Natural killer cell (primary cell): ENCODE measurements at regions of chr2 and their contacts with region 1.

Region 1: GRCh38 chr2:170928824-170929685 is at the start of gene GORASP2:
- DNase-seq: peak; percentile 96 to 99
- ATAC-seq: peak; percentile 89 to 97 (median 89)
- H3K4me3 ChIP-seq: peak within 1 kb of the TSS; percentile 69
- H3K4me3 Mint-ChIP-seq: peak within 1 kb of the TSS; percentile 96
- H3K27ac ChIP-seq: peak within 1 kb of the TSS; percentile 81
- H3K27ac Mint-ChIP-seq: peak within 1 kb of the TSS; percentile 93 to 94
- H3K4me1 ChIP-seq: peaks cover 17% of the 10 kb centered on the region
- H3K4me1 Mint-ChIP-seq: peaks cover 45 to 54% of the 10 kb centered on the region in 2 donors
- H3K27me3 ChIP-seq: no peaks in the 10 kb centered on the region
- H3K27me3 Mint-ChIP-seq: no peaks in the 10 kb centered on the region
- CTCF ChIP-seq: peak; percentile 97
- total RNA-seq, gene GORASP2: 75.3 to 94.5 (median 80.3) TPM

Region 2: GRCh38 chr2:169584005-169584877 is 1344.8 kb before region 1 on chr2 and contains the start of gene PPIG:
- intact Hi-C with region 1: loop called (anchors 5 kb)
- DNase-seq: peak; percentile 85 to 97
- ATAC-seq: peak; percentile 86 to 93 (median 87)
- H3K4me3 ChIP-seq: peak within 1 kb of the TSS; percentile 98
- H3K4me3 Mint-ChIP-seq: peak within 1 kb of the TSS; percentile 96
- H3K27ac ChIP-seq: peak within 1 kb of the TSS; percentile 99
- H3K27ac Mint-ChIP-seq: peak within 1 kb of the TSS; percentile 97 to 99
- H3K4me1 ChIP-seq: peaks cover 10% of the 10 kb centered on the region
- H3K4me1 Mint-ChIP-seq: peaks cover 31 to 32% of the 10 kb centered on the region in 2 donors
- H3K27me3 ChIP-seq: no peaks in the 10 kb centered on the region
- H3K27me3 Mint-ChIP-seq: no peaks in the 10 kb centered on the region
- CTCF ChIP-seq: no peak
- total RNA-seq, gene PPIG: 42.2 to 58.3 (median 56.1) TPM

Region 3: GRCh38 chr2:171086352-171087290 is 157.6 kb after region 1 on chr2:
- intact Hi-C with region 1: loop called (anchors 2 kb)
- DNase-seq: peak in 1 of 2 donors; percentile 81
- ATAC-seq: peak; percentile 59 to 75 (median 67)
- H3K4me3 ChIP-seq: no peak overlapping the region
- H3K4me3 Mint-ChIP-seq: peak overlapping the region; percentile 74
- H3K27ac ChIP-seq: no peak overlapping the region
- H3K27ac Mint-ChIP-seq: peak overlapping the region; percentile 10 to 49
- H3K4me1 ChIP-seq: peaks cover 3% of the 10 kb centered on the region
- H3K4me1 Mint-ChIP-seq: peaks cover 41 to 49% of the 10 kb centered on the region in 2 donors
- H3K27me3 ChIP-seq: no peaks in the 10 kb centered on the region
- H3K27me3 Mint-ChIP-seq: no peaks in the 10 kb centered on the region
- CTCF ChIP-seq: peak; percentile 50

Region 4: DNA sequence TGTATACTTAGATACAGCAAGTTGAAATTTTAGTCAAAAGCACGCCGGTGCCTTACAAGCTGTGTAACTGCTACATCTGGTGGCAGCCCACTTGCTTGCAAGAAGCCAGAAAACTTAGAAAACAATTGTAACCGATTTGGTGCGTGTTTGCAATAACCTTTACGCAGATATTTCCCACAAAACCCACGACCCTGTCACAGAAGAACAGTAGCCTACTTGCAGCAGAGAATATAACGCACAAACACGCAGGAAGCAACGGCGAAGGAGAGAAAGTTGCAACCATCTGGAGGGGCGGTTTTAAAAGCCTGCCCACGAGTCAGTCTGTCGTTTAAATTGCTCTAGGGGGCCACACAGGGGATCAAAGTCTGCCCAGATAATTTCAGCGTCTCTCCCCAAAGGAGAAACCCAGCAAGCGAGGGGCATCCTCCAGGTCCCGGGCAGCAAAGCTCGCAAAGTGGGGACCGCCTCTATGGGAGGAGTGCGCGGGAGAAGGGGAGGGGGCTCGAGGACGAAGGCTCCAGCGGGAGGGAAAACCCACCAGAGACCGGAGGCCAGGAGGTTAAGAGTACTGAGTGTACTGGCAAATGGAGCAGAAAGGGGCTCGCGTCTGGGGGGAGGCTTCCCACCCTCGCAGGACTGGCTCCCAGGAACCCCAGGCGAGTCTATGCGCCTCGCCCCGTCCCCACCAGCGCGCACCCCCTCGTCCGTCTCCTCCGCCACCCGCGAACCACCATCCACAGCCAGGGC is 230.5 kb after region 1 on chr2:
- intact Hi-C with region 1: loop called (anchors 2 kb)
- DNase-seq: peak; percentile 47 to 86
- ATAC-seq: peak; percentile 28 to 46 (median 33)
- H3K4me3 ChIP-seq: peak overlapping the region; percentile 74
- H3K4me3 Mint-ChIP-seq: peak overlapping the region; percentile 98
- H3K27ac ChIP-seq: peak overlapping the region; percentile 90
- H3K27ac Mint-ChIP-seq: peak overlapping the region; percentile 87 to 96
- H3K4me1 ChIP-seq: peaks cover 3% of the 10 kb centered on the region
- H3K4me1 Mint-ChIP-seq: peaks cover 48 to 50% of the 10 kb centered on the region in 2 donors
- H3K27me3 ChIP-seq: no peaks in the 10 kb centered on the region
- H3K27me3 Mint-ChIP-seq: no peaks in the 10 kb centered on the region
- CTCF ChIP-seq: peak; percentile 50

Region 5: DNA sequence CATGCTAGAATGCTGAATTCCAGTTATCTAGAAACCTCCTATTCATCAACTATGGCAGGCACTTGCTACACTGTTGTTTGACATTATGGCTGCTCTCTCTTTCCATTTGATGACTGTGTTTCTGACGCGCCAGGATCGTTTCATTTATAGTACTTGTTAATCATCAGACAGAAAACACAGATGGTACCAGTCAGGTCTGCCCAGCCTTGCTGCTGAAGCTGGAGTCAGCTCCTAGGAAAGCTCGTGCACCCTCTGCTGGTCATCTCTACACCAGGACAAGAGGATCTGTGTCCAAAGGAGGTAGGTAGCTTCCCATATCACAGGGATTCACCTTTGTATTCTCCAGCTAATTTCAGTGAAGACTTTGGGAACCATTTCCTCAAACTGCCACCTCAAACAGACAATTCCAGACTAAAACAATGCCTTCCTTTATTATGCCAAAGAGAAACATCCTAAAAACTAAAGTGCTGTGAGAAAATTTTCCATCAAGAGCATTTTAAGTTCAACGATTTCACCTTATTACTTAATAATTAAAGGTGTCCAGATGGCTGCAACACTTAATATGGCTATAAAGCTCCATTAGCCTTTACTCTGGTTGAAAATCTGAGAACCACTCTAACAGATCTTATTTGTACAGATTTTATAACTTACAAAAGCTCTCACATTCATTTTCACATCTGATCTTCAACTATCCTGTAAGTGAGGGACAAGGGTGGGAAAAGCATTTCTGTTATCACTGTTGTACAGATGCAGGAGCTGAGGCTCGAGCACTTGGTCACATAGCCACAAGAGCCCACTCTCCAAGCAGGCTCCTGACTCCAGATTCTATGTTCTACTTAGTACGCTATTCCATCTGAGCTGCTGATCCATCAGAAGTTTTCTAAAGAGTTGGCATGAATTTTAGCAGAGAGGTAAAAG is 487.2 kb after region 1 on chr2:
- intact Hi-C with region 1: loop called (anchors 1 kb)
- DNase-seq: peak; percentile 45 to 88
- ATAC-seq: peak; percentile 88 to 99 (median 98)
- H3K4me3 ChIP-seq: no peak overlapping the region
- H3K4me3 Mint-ChIP-seq: no peak overlapping the region
- H3K27ac ChIP-seq: no peak overlapping the region
- H3K27ac Mint-ChIP-seq: peak overlapping the region in 1 of 2 donors; percentile 6
- H3K4me1 ChIP-seq: no peaks in the 10 kb centered on the region
- H3K4me1 Mint-ChIP-seq: peaks cover 6 to 14% of the 10 kb centered on the region in 2 donors
- H3K27me3 ChIP-seq: no peaks in the 10 kb centered on the region
- H3K27me3 Mint-ChIP-seq: no peaks in the 10 kb centered on the region
- CTCF ChIP-seq: peak; percentile 70

Region 6: GRCh38 chr2:171433763-171434670 is 505.0 kb after region 1 on chr2 and contains the starts of genes DCAF17 and METTL8:
- intact Hi-C with region 1: loop called (anchors 2 kb)
- DNase-seq: peak; percentile 89 to 96
- ATAC-seq: peak; percentile 93 to 98 (median 93)
- H3K4me3 ChIP-seq: peak within 1 kb of the TSS; percentile 87
- H3K4me3 Mint-ChIP-seq: peak within 1 kb of the TSS; percentile 94
- H3K27ac ChIP-seq: peak within 1 kb of the TSS; percentile 97
- H3K27ac Mint-ChIP-seq: peak within 1 kb of the TSS; percentile 88 to 91
- H3K4me1 ChIP-seq: peaks cover 10% of the 10 kb centered on the region
- H3K4me1 Mint-ChIP-seq: peaks cover 27 to 31% of the 10 kb centered on the region in 2 donors
- H3K27me3 ChIP-seq: no peaks in the 10 kb centered on the region
- H3K27me3 Mint-ChIP-seq: no peaks in the 10 kb centered on the region
- CTCF ChIP-seq: peak; percentile 44
- total RNA-seq, gene DCAF17: 20.0 to 33.8 (median 30.7) TPM
- total RNA-seq, gene METTL8: 14.3 to 16.7 (median 15.2) TPM

Region 7: DNA sequence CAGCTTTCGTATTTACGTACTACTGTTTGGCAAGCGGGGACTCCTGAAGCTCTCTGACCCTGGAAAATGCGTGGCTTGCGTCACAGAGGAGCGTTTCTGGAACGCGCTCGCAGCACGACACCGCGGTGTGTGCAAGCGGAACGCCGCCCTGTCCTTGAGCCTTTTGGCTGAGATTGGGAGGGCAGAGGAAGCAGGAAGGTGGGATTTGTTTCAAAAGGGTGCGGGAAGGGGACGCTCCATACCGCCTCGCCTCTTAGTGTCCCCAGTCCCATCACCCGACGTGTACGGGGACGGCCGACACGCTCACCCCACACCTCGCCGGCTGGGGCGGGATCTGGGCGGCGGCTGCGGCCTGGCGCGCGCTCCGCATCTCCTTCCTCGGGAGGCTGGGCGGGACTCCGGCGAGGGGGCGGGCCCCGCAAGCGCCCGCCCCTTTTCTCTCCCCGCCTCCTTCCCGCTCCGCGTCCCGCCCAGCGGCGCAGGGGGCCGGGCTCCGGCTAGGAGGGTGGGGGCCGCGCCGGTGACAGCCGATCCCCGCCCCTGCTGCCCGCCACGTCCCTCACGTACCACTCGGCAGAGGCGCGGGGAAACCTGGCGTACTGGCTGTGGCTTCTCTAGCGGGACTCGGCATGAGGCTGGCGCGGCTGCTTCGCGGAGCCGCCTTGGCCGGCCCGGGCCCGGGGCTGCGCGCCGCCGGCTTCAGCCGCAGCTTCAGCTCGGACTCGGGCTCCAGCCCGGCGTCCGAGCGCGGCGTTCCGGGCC is 1626.6 kb after region 1 on chr2 and contains the start of gene PDK1:
- intact Hi-C with region 1: loop called (anchors 5 kb)
- DNase-seq: peak; percentile 88 to 96
- ATAC-seq: peak; percentile 94 to 99 (median 94)
- H3K4me3 ChIP-seq: peak within 1 kb of the TSS; percentile 93
- H3K4me3 Mint-ChIP-seq: peak within 1 kb of the TSS; percentile 94
- H3K27ac ChIP-seq: peak within 1 kb of the TSS; percentile 71
- H3K27ac Mint-ChIP-seq: peak within 1 kb of the TSS; percentile 80 to 91
- H3K4me1 ChIP-seq: peaks cover 4% of the 10 kb centered on the region
- H3K4me1 Mint-ChIP-seq: peaks cover 27 to 39% of the 10 kb centered on the region in 2 donors
- H3K27me3 ChIP-seq: no peaks in the 10 kb centered on the region
- H3K27me3 Mint-ChIP-seq: peaks cover 0 to 2% of the 10 kb centered on the region in 2 donors
- CTCF ChIP-seq: no peak
- total RNA-seq, gene PDK1: 17.3 to 29.1 (median 22.6) TPM